ENCODE measurements at regions of chr7 and their contacts with region 1.

Region 1: GRCh38 chr7:30911561-30911969 is at the start of gene AQP1:
- DNase-seq: peak; percentile 97
- ATAC-seq: peak; percentile 82
- H3K4me3 ChIP-seq: peak within 1 kb of the TSS; percentile 67 to 88
- H3K27ac ChIP-seq: peak within 1 kb of the TSS; percentile 61 to 94
- H3K4me1 ChIP-seq: no peaks in the 10 kb centered on the region
- H3K27me3 ChIP-seq: no peaks in the 10 kb centered on the region
- total RNA-seq, gene AQP1: 680 to 1,062 TPM

Region 2: DNA sequence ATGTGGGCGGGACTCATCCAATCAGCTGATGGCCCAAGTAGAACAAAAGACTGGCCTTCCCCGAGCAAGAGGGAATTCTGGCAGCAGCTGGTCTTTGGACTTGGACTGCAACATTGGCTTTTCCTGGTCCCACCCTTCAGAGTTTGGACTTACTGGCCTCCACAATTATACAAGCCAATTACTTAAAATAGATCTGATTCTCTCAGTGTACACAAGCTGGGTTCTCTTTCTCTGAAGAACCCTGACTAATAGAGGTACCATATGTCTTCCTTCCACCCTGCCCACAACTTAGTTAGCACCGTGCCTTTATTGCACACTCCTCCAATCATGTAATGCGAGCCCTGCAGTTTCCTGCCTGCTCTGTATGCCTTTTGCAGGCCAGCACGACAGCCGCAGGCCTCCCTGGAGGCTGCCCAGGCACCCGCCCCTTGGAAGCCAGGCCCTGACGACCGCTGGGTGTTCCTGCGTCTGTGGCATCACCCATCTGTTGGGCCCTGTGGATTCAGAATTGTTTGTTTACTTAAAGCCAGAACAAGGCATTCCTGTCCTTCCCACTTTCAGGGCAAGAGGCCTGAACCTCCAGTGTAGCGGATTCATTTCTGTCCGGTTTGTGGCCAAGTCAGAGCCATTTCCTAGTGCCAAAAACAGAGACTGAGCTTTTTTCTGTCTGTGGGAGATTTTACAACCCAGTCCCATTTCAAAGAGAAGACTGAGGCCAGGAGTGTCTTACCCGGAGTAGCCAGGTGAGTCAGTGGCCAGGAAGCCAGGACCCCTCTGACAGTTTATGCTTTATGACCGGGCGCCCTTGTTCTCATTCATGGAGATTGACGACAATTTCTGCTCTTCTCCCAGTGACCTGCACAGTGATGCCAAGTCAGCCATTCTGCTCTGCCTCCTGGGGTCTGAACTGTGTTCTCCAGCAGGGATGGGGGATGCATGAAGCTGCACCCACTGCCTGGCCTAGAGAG is 160.6 kb before region 1 on chr7:
- intact Hi-C with region 1: loop called in 1 of 2 experiments (anchors 5 kb)
- DNase-seq: peak; percentile 86 to 87
- ATAC-seq: peak; percentile 75
- H3K4me3 ChIP-seq: no peak overlapping the region
- H3K27ac ChIP-seq: peak overlapping the region; percentile 42 to 59
- H3K4me1 ChIP-seq: no peaks in the 10 kb centered on the region
- H3K27me3 ChIP-seq: no peaks in the 10 kb centered on the region

Region 3: DNA sequence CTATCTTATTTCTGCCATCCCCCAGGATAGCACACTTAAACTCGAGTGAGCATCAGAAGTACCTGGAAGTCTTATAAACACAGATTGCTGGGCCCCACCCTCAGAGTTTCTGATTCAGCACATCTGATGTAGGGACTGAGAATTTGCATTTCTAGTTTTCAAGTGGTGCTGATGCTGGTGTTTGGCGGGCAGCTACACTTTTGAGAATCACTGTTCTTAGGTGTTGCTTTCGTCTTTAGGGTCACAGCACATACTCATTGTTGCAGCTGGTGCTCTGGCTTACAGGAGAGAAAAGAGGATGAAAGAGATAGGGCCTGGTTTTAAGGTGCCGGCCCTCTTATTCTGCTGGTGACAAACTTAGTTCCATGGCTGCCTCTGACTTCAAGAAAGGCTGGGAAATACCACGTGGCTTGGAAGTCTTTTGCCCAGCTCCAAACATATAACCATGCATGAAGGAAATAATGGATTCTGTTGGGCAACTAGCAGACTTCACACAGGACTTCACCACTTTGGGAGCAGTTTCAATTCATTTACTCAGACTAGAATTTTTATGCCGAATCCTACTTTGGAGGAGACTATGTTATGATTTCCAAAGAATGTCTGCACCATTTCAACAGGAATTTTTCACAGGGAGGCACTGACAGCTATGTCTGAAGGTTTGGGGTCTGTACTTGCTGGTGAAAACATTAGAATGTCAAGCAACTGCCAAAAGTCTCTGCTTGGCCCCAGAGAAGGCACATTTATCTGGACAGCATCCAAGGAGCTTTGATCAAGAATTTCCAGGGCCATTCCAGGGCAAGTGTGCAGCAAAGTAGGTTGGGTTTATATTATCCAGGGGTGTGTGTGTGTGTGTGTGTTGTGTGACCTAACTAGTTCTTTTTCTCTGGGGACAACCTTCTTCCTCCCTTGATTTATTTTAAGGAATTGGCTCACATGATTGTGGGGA is 147.3 kb before region 1 on chr7:
- intact Hi-C with region 1: loop called in 1 of 2 experiments (anchors 5 kb)
- DNase-seq: no peak
- ATAC-seq: peak; percentile 59
- H3K4me3 ChIP-seq: no peak overlapping the region
- H3K27ac ChIP-seq: peak overlapping the region; percentile 36 to 98
- H3K4me1 ChIP-seq: peaks cover 8 to 14% of the 10 kb centered on the region in 2 donors
- H3K27me3 ChIP-seq: no peaks in the 10 kb centered on the region

Region 4: DNA sequence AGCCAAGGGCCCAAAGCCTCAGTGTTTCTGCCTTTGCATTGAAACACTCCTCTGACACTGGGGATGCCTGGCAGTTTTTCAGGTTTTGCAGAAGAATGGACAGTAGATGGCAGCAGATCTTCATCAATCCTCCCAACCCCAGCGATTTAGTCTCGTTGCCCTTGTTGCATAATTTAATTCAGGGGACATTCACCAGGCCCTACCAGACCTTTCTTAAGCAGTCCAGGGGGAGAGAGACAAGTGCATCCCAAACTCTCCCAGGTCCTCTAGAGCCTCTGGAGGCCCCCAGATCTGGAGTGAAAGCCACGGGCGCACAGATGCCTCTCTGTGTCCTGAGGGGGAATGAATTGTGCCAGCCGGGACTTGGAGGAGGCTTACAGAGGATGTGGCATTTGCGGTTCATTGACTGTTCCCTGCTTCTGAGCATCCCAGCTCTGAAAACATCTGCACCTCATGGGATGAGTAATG is 110.7 kb before region 1 on chr7:
- intact Hi-C with region 1: loop called (anchors 2 to 5 kb)
- DNase-seq: no peak
- ATAC-seq: peak; percentile 86
- H3K4me3 ChIP-seq: no peak overlapping the region
- H3K27ac ChIP-seq: peak overlapping the region in 1 of 2 donors; percentile 92
- H3K4me1 ChIP-seq: peaks cover 4 to 16% of the 10 kb centered on the region in 2 donors
- H3K27me3 ChIP-seq: no peaks in the 10 kb centered on the region

Region 5: GRCh38 chr7:30851651-30852307 is 59.8 kb before region 1 on chr7:
- intact Hi-C with region 1: loop called (anchors 1 to 5 kb)
- DNase-seq: peak; percentile 82 to 87
- ATAC-seq: peak; percentile 77
- H3K4me3 ChIP-seq: no peak overlapping the region
- H3K27ac ChIP-seq: peak overlapping the region; percentile 95
- H3K4me1 ChIP-seq: no peaks in the 10 kb centered on the region
- H3K27me3 ChIP-seq: no peaks in the 10 kb centered on the region

Region 6: GRCh38 chr7:30863706-30864035 is 47.9 kb before region 1 on chr7:
- intact Hi-C with region 1: loop called in 1 of 2 experiments (anchors 5 kb)
- DNase-seq: no peak
- ATAC-seq: peak; percentile 19
- H3K4me3 ChIP-seq: no peak overlapping the region
- H3K27ac ChIP-seq: peak overlapping the region; percentile 24 to 60
- H3K4me1 ChIP-seq: peaks cover 0 to 3% of the 10 kb centered on the region in 2 donors
- H3K27me3 ChIP-seq: no peaks in the 10 kb centered on the region

Region 7: DNA sequence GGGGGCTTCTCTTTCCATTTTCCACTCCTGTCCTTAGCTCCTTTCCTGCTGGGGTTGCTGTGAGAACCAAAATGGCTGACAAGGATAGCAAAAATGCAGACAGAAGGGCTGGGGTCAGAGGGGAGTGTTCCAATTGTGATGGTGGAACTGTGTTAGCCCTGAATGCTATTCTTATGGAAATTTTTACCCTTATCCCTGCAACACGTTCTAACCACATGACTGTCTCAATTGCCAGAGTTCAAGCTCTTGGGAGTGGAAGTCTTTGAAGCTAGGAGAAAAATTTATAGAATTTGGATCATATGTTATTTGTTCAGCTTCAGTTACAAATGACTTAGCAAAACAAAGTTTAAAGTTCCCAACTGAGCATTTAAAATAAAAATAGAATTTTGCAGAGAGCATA is 274.6 kb after region 1 on chr7:
- intact Hi-C with region 1: no loop called
- DNase-seq: no peak
- ATAC-seq: no peak
- H3K4me3 ChIP-seq: no peak overlapping the region
- H3K27ac ChIP-seq: no peak overlapping the region
- H3K4me1 ChIP-seq: no peaks in the 10 kb centered on the region
- H3K27me3 ChIP-seq: no peaks in the 10 kb centered on the region

Region 8: DNA sequence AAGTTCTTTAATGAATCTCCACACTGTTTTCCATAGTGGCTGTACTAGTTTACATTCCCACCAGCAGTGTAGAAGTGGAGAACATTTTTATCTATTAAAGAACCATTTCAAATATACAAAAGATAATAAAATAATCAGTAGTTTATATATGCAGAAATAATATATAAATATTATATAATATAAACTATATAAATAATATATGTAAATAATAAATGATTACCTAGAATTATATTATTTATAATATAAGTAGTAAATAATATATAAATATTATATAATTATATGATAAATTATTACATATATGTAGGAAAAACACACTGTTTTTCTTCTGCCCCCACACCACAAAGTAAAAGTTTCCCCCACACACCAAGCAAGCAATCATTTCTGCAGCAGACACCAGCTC is 512.4 kb after region 1 on chr7:
- intact Hi-C with region 1: no loop called
- DNase-seq: no peak
- ATAC-seq: no peak
- H3K4me3 ChIP-seq: no peak overlapping the region
- H3K27ac ChIP-seq: no peak overlapping the region
- H3K4me1 ChIP-seq: no peaks in the 10 kb centered on the region
- H3K27me3 ChIP-seq: no peaks in the 10 kb centered on the region

Region 9: DNA sequence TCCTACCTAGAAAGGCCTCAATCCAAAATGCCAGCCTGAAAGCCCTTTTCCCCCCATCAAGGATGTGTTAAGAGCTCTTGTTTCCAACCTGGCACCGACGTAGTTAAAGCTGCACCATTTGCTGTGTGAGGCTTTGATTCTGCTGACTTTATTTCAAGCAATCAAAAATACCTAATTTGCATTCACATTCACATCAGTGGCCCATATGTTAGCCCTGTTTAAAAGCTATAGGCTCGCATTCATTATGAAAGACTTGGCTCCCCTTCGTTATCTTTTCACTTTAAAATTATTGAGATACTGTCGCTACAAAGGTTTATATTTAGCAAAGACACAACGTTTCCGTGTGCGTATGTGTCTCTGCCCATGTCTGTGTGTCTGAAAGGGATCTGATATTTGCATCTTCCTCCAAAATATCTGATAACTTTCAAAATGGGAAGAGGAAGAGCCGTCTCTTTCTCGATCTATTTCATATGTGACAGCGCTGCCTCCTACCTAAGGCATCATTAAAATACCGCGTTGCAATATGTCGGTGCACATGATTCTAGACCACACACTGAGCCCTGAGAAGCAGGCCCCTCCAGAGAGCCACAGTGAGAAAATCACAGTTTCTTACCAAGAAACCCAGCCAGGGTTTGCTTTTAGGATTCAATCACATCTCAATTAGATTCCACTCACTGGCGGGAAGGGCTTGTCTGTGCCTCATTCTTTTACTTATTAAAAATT is 545.2 kb after region 1 on chr7:
- intact Hi-C with region 1: no loop called
- DNase-seq: no peak
- ATAC-seq: no peak
- H3K4me3 ChIP-seq: no peak overlapping the region
- H3K27ac ChIP-seq: no peak overlapping the region
- H3K4me1 ChIP-seq: no peaks in the 10 kb centered on the region
- H3K27me3 ChIP-seq: no peaks in the 10 kb centered on the region

Region 10: GRCh38 chr7:32495298-32496176 is 1584.0 kb after region 1 on chr7 and contains the start of gene AVL9:
- intact Hi-C with region 1: loop called in 1 of 2 experiments (anchors 10 kb)
- DNase-seq: peak; percentile 99 to 100
- ATAC-seq: peak; percentile 100
- H3K4me3 ChIP-seq: peak within 1 kb of the TSS; percentile 79 to 93
- H3K27ac ChIP-seq: peak within 1 kb of the TSS; percentile 77 to 89
- H3K4me1 ChIP-seq: no peaks in the 10 kb centered on the region
- H3K27me3 ChIP-seq: no peaks in the 10 kb centered on the region
- total RNA-seq, gene AVL9: 35.8 to 37.5 TPM

Measured in aorta (tissue), 5 donors.